ENCODE measurements at regions of chr12 and their contacts with region 1.

Region 1: GRCh38 chr12:10562306-10562933 is 51.0 kb downstream of the MAGOHB start:
- DNase-seq: peak; percentile 22
- H3K4me3 ChIP-seq: no peak overlapping the region
- H3K27ac ChIP-seq: no peak overlapping the region
- H3K4me1 ChIP-seq: no peaks in the 10 kb centered on the region
- H3K27me3 ChIP-seq: no peaks in the 10 kb centered on the region
- CTCF ChIP-seq: peak; percentile 35 to 86 (median 81)
- POLR2A ChIP-seq: no peak

Region 2: DNA sequence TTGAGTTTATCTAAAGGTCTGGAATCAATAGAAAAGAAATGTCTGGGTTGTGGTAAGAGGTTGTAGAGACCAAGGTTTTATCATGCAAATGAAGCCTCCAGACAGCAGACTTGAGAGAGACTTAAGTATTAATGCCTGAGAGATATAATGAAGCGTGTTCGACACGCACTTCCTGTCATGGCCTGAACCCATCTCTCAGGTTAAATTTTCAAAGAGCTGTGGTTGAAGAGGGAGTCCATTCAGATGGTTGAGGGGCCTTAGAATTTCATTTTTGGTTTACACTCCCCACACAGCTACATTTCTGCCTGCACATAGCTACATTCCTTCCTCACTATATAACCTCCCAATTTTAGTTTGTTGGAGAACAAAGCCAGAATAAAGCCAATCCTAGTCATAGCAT is 601.3 kb before region 1 on chr12:
- intact Hi-C with region 1: no loop called
- DNase-seq: no peak
- H3K4me3 ChIP-seq: no peak overlapping the region
- H3K27ac ChIP-seq: no peak overlapping the region
- H3K4me1 ChIP-seq: no peaks in the 10 kb centered on the region
- H3K27me3 ChIP-seq: no peaks in the 10 kb centered on the region
- CTCF ChIP-seq: no peak
- POLR2A ChIP-seq: no peak

Region 3: DNA sequence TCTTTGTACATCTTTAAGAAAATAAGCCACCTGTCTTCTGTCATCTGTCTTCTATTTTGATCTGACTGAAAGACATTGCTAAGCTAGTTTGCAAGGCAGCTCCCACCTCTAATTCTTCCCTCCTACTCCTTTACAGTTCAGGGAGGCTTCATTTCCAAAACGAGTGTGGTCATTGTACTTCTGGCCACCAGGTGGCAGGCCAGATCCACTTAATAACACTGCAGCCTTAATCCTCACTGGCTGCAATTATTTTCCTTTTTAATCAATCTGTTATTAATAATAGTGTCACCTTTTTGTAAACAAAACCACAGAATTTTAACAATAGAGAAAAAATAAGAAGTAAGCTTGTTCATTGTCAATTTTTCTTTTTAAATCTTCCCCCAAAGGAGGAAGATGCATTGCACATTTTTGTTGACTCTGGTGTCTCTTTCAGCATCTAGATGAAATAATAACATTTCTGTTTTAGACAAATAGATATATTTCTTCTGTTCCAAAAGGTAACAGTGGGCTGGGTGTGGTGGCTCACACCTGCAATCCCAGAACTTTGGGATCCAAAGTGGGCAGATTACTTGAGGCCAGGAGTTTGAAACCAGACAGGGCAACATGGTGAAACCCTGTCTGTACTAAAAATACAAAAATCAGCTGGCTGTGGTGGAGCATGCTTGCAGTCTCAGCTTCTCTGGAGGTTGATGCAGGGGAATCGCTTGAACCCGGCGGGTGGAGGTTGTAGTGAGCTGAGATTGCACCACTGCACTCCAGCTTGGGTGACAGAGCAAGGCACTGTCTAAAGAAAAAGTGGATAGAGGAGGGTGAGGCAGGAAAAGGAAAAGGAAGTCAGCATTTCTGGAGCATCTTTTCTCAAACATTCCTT is 326.4 kb before region 1 on chr12:
- intact Hi-C with region 1: loop called (anchors 2 kb)
- DNase-seq: no peak
- H3K4me3 ChIP-seq: no peak overlapping the region
- H3K27ac ChIP-seq: no peak overlapping the region
- H3K4me1 ChIP-seq: no peaks in the 10 kb centered on the region
- H3K27me3 ChIP-seq: no peaks in the 10 kb centered on the region
- CTCF ChIP-seq: peak; percentile 77 to 86 (median 82)
- POLR2A ChIP-seq: no peak

Region 4: DNA sequence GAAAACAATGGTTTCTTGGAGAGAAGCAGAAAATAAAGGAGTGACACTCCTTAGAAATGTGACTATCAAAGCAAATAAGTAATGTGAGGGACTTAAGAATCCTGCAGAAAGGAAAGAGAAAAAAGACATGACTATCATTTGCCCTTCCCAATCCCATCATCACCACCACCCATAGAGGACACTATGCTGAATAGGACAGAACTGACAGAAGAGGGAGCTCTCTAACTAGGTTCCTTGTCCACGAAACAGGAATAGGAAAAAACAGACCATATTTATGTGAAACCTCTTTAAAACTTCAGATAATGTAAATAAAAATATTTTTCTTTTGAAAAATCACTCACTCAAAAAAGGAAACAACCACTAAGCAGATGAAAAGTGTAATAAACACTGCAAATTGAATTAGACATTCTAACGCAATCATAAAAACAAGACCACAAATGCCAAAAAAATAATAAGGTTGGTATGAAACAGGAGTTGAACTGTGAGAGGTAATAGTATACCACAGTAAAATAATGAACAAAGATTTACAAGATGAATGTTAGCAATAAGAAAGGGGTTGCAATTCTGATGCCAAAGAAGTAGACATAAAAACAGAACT is 230.7 kb before region 1 on chr12:
- intact Hi-C with region 1: loop called (anchors 5 kb)
- DNase-seq: peak; percentile 12
- H3K4me3 ChIP-seq: no peak overlapping the region
- H3K27ac ChIP-seq: no peak overlapping the region
- H3K4me1 ChIP-seq: no peaks in the 10 kb centered on the region
- H3K27me3 ChIP-seq: no peaks in the 10 kb centered on the region
- CTCF ChIP-seq: peak in 3 of 4 experiments; percentile 62 to 80 (median 76)
- POLR2A ChIP-seq: no peak

Measured in prostate gland (tissue), 2 donors.